ENCODE measurements at regions of chr1 and their contacts with region 1.

Region 1: DNA sequence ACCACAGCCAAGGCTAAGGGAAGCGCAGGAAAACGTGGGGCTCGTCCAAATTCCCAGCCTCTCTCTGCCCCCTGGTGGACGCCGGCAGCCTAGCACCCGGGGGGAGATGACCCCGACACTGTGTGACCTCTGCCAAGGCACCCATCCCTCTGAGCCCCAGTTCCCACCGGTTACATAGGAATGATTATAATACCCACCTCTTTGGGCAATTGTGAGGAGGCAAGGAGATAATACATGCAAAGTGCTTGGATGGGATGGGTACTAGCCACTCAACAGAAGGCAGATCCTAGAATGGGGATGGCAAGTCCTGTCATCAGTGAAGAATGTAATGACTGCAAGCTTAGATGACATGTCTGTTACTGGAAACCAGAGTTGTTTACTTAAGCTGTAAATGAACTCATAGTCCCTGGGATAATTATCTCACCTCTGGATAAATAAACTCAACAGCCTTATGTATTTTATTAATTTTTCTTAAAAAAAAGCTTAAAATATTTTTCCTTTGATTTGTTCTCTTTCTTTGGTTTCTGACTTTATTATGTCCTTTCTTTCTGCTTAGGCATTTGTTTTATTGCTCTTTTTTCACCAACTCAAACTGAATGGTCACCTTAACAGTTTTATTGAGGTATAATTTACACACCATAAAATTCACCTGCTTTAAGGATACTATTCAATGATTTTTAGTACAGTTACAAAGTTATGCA is 11.3 kb upstream of the BMP8B start:
- DNase-seq: peak; percentile 82
- H3K4me3 ChIP-seq: no peak overlapping the region
- H3K27ac ChIP-seq: peak overlapping the region; percentile 43
- H3K4me1 ChIP-seq: peaks cover 14% of the 10 kb centered on the region
- H3K27me3 ChIP-seq: no peaks in the 10 kb centered on the region
- CTCF ChIP-seq: peak; percentile 72 to 81

Region 2: GRCh38 chr1:39609618-39610331 is 190.1 kb before region 1 on chr1:
- CTCF ChIA-PET with region 1: interaction called, 6 read pairs
- dilution Hi-C with region 1: loop called (anchors 10 kb)
- in situ Hi-C with region 1: no loop called
- intact Hi-C with region 1: loop called (anchors 1 kb)
- DNase-seq: peak; percentile 15
- H3K4me3 ChIP-seq: no peak overlapping the region
- H3K27ac ChIP-seq: no peak overlapping the region
- H3K4me1 ChIP-seq: peaks cover 4% of the 10 kb centered on the region
- H3K27me3 ChIP-seq: no peaks in the 10 kb centered on the region
- CTCF ChIP-seq: peak; percentile 59 to 64

Region 3: GRCh38 chr1:39738622-39739366 is 61.1 kb before region 1 on chr1 and contains the start of gene PPIE:
- CTCF ChIA-PET with region 1: no interaction called
- dilution Hi-C with region 1: loop called (anchors 5 kb)
- in situ Hi-C with region 1: no loop called
- intact Hi-C with region 1: loop called (anchors 10 kb)
- DNase-seq: peak; percentile 80
- H3K4me3 ChIP-seq: peak within 1 kb of the TSS; percentile 90 to 98 (median 95)
- H3K27ac ChIP-seq: peak within 1 kb of the TSS; percentile 57
- H3K4me1 ChIP-seq: peaks cover 21% of the 10 kb centered on the region
- H3K27me3 ChIP-seq: no peaks in the 10 kb centered on the region
- CTCF ChIP-seq: no peak
- total RNA-seq, gene PPIE: 25.0 to 50.4 TPM

Region 4: GRCh38 chr1:39892601-39893595 is 93.0 kb after region 1 on chr1:
- CTCF ChIA-PET with region 1: no interaction called
- dilution Hi-C with region 1: loop called (anchors 5 kb)
- in situ Hi-C with region 1: no loop called
- intact Hi-C with region 1: no loop called
- DNase-seq: peak; percentile 64
- H3K4me3 ChIP-seq: no peak overlapping the region
- H3K27ac ChIP-seq: no peak overlapping the region
- H3K4me1 ChIP-seq: peaks cover 46% of the 10 kb centered on the region
- H3K27me3 ChIP-seq: no peaks in the 10 kb centered on the region
- CTCF ChIP-seq: no peak

Region 5: GRCh38 chr1:40040511-40041465 is 240.9 kb after region 1 on chr1 and contains the start of gene CAP1:
- CTCF ChIA-PET with region 1: interaction called, 3 read pairs
- dilution Hi-C with region 1: loop called (anchors 10 kb)
- in situ Hi-C with region 1: no loop called
- intact Hi-C with region 1: no loop called
- DNase-seq: peak; percentile 99
- H3K4me3 ChIP-seq: peak within 1 kb of the TSS; percentile 93 to 98 (median 98)
- H3K27ac ChIP-seq: peak within 1 kb of the TSS; percentile 85
- H3K4me1 ChIP-seq: peaks cover 46% of the 10 kb centered on the region
- H3K27me3 ChIP-seq: no peaks in the 10 kb centered on the region
- CTCF ChIP-seq: no peak
- total RNA-seq, gene CAP1: 715 to 877 TPM